ENCODE measurements at regions of chr1 and their contacts with region 1.

Region 1: GRCh38 chr1:151934048-151934493 is 24.8 kb upstream of the THEM4 start:
- DNase-seq: peak; percentile 42
- CTCF ChIP-seq: peak; percentile 61

Region 2: GRCh38 chr1:151898513-151898991 is 35.5 kb before region 1 on chr1:
- CTCF ChIA-PET with region 1: interaction called, 19 read pairs
- POLR2A ChIA-PET with region 1: no interaction called
- DNase-seq: no peak
- CTCF ChIP-seq: no peak

Region 3: DNA sequence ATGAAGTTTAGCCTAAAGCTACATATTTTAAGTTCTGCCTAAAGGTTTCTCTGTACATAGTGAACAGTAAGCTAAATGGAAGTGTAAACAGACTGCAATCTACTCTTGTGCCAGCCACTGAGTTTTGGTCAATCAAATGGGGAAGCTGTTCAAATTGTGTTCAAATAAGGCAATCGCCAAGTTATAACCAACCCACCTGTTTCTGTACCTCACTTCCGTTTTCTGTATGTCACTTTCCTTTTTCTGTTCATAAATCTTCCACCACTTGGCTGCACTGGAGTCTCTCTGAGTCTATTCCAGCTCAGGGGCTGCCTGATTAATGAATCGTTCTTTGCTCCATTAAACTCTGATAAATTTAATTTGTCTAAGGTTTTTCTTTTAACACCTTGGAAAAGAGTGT is 13.9 kb before region 1 on chr1:
- CTCF ChIA-PET with region 1: interaction called, 11 read pairs
- POLR2A ChIA-PET with region 1: no interaction called
- DNase-seq: no peak
- CTCF ChIP-seq: no peak

Region 4: GRCh38 chr1:151949371-151950193 is 15.5 kb after region 1 on chr1:
- CTCF ChIA-PET with region 1: interaction called, 21 read pairs
- POLR2A ChIA-PET with region 1: no interaction called
- DNase-seq: no peak
- CTCF ChIP-seq: no peak